Right cardiac atrium (tissue), 5 donors: ENCODE measurements at regions of chr10 and their contacts with region 1.

Region 1: DNA sequence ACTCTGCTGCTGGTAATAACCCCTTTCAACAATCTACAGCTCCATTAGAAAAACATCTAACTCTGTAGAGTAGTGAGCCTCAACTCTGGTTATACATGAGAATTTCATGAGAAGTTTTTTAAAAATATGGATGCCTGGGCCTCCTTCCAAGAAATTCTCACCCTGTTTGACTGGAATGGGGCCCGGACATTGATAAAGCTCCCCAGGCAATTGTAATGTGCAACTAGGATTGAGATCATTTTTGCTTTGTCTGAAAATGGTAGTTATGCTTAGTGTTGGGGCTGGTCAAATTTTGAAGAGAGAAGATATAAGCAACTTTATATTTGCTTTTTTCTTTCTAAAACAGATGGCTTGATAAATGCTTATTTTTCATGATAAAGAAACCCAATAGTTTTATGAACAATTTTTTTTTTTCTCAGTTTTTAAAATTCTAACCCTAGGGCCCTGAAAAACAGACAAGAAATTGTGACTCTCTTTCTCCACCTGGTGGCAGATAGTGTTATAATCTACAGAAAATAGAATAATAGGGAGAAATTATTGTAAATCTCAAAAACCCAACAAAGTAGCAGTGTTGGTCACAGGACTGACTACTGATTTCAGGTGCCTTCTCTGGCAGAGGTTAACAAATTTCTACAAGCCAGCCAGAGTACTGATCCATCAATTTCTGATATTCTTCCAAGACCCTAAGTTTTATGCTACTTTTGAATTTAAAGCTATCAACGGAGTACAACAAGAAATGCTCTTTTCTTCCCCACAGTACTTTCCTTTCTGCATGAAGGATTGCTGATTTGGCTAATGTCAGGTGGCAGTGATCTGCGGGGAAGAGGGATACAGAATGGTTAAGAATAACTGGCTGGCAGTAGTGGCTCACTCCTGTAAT is 174.8 kb downstream of the DKK1 start:
- DNase-seq: no peak
- ATAC-seq: no peak
- H3K4me3 ChIP-seq: no peak overlapping the region
- H3K27ac ChIP-seq: no peak overlapping the region
- H3K4me1 ChIP-seq: no peaks in the 10 kb centered on the region
- H3K27me3 ChIP-seq: no peaks in the 10 kb centered on the region

Region 2: GRCh38 chr10:52308251-52309031 is 180.4 kb before region 1 on chr10:
- intact Hi-C with region 1: loop called (anchors 2 to 5 kb)
- DNase-seq: peak; percentile 70 to 78 (median 72)
- ATAC-seq: peak; percentile 94 to 95
- H3K4me3 ChIP-seq: peak overlapping the region; percentile 74
- H3K27ac ChIP-seq: no peak overlapping the region
- H3K4me1 ChIP-seq: no peaks in the 10 kb centered on the region
- H3K27me3 ChIP-seq: no peaks in the 10 kb centered on the region